Calu3 (cell line): ENCODE measurements at regions of chr12 and their contacts with region 1.

Region 1: GRCh38 chr12:118372541-118373495 is at the start of gene TAOK3:
- DNase-seq: peak; percentile 99
- H3K4me3 Mint-ChIP-seq: peak within 1 kb of the TSS; percentile 99
- H3K27ac Mint-ChIP-seq: peak within 1 kb of the TSS; percentile 93
- H3K4me1 Mint-ChIP-seq: peaks cover 16% of the 10 kb centered on the region
- H3K27me3 Mint-ChIP-seq: no peaks in the 10 kb centered on the region
- CTCF ChIP-seq: no peak
- total RNA-seq, gene TAOK3: 39.1 and 44.1 TPM in 2 replicates

Region 2: GRCh38 chr12:117874842-117875434 is 497.9 kb before region 1 on chr12:
- CTCF ChIA-PET with region 1: no interaction called
- intact Hi-C with region 1: loop called (anchors 5 kb)
- DNase-seq: peak; percentile 87
- H3K4me3 Mint-ChIP-seq: no peak overlapping the region
- H3K27ac Mint-ChIP-seq: no peak overlapping the region
- H3K4me1 Mint-ChIP-seq: no peaks in the 10 kb centered on the region
- H3K27me3 Mint-ChIP-seq: peaks cover 15% of the 10 kb centered on the region
- CTCF ChIP-seq: peak; percentile 95

Region 3: DNA sequence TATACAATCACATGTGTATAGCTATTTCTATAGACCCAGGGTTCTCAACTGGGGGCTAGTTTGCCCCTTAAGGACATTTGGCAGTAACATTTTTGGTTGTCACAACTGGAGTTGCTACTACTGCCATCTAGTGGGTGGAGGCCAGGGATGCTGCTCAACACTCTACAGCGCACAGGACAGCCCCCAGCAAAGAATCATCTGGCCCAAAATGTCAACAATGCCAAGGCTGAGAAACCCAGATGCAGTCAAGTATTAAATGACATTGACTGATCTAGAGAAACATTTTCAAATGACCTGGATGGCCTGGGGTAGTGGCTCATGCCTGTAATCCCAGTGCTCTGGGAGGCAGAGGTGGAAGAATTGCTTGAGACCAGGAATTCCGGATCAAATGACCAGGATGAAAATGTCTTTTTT is 317.7 kb before region 1 on chr12:
- CTCF ChIA-PET with region 1: no interaction called
- intact Hi-C with region 1: loop called (anchors 10 kb)
- DNase-seq: peak; percentile 62
- H3K4me3 Mint-ChIP-seq: no peak overlapping the region
- H3K27ac Mint-ChIP-seq: no peak overlapping the region
- H3K4me1 Mint-ChIP-seq: peaks cover 62% of the 10 kb centered on the region
- H3K27me3 Mint-ChIP-seq: no peaks in the 10 kb centered on the region
- CTCF ChIP-seq: peak; percentile 64

Region 4: DNA sequence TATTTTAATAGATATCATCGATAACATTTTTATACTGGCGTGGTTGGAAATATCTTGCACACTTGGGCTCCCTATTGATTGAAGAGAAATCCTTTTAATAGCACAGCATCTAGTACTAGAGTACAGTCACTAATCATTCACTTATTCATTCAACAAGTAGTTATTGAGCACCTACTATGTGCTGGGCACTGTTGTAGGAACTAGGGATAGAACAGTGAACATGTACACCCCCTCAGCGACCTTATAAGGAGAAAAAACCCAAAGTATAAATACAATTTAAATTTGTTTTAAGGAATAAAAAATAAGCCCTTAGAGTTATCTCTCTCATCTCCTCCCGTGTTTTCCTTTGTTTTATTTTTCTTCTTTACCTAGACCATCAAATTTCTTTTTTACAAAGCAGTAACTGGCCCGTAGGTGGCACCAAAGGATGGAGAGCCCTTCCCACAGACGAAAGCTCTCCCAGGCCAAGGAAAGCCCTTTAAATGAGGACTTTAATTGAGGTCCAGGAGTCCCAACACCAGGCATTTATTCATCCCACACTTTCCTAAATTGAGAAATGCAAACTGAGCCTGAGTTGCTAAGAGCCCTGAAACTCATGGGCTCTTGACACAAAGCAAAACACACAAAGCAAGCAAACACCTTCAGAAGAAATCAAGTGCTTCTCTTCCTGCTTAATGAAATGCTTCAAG is 207.9 kb before region 1 on chr12:
- CTCF ChIA-PET with region 1: interaction called, 17 read pairs
- intact Hi-C with region 1: loop called (anchors 1 kb)
- DNase-seq: peak; percentile 50
- H3K4me3 Mint-ChIP-seq: no peak overlapping the region
- H3K27ac Mint-ChIP-seq: no peak overlapping the region
- H3K4me1 Mint-ChIP-seq: no peaks in the 10 kb centered on the region
- H3K27me3 Mint-ChIP-seq: no peaks in the 10 kb centered on the region
- CTCF ChIP-seq: peak; percentile 37

Region 5: DNA sequence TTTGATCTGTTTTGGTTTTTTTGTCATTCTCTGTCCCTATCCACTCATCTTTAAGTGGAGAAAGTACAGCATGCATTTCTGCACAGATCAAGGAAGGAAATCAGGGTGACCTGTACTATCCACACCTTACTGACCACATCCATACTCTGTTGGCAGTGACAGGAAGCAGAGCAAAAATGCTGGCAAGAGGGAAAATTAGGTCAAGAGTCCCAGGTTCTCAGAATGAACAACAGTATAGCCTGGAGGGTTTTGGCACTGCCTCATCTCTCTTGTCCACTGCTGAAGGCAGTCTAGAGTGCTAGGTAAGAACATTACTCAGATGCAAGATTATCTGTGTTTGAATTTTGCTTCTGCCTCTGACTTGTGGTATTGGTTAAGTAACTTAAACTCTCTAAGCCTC is 70.8 kb before region 1 on chr12:
- CTCF ChIA-PET with region 1: interaction called, 3 read pairs
- intact Hi-C with region 1: loop called (anchors 5 kb)
- DNase-seq: peak; percentile 45
- H3K4me3 Mint-ChIP-seq: no peak overlapping the region
- H3K27ac Mint-ChIP-seq: no peak overlapping the region
- H3K4me1 Mint-ChIP-seq: peaks cover 38% of the 10 kb centered on the region
- H3K27me3 Mint-ChIP-seq: no peaks in the 10 kb centered on the region
- CTCF ChIP-seq: no peak

Region 6: GRCh38 chr12:118446244-118446643 is 73.4 kb after region 1 on chr12:
- CTCF ChIA-PET with region 1: no interaction called
- intact Hi-C with region 1: no loop called
- DNase-seq: no peak
- H3K4me3 Mint-ChIP-seq: no peak overlapping the region
- H3K27ac Mint-ChIP-seq: no peak overlapping the region
- H3K4me1 Mint-ChIP-seq: no peaks in the 10 kb centered on the region
- H3K27me3 Mint-ChIP-seq: peaks cover 29% of the 10 kb centered on the region
- CTCF ChIP-seq: no peak